ENCODE measurements at regions of chr6 and their contacts with region 1.

Region 1: DNA sequence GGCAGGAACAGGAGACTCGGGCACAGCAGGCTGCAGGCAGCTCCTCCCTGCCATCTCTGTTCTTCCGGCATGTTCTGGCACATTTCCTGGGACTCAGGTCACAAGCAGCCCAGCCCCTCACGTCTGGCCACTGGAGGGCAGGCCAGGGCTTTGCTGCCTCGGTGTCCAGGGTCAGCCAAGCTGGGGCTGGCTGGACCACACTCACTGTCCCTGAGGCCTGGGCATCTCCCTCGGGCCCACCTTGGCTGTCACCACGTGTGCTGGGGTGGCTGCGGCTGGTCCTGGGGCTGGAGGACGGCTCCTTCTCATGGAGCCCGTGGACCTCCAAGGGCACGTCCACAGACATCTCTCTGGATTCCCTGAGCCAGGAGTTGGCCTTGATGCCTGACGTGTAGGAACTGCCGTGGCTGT is 18.5 kb downstream of the FRMD1 start:
- DNase-seq: peak; percentile 87
- H3K4me3 ChIP-seq: no peak overlapping the region
- H3K27ac ChIP-seq: no peak overlapping the region
- H3K4me1 ChIP-seq: peaks cover 0 to 7% of the 10 kb centered on the region in 2 experiments; a peak in 1 of 4 replicates
- H3K27me3 ChIP-seq: no peaks in the 10 kb centered on the region
- CTCF ChIP-seq: no peak
- EP300 ChIP-seq: no peak
- RAD21 ChIP-seq: peak; percentile 77

Region 2: GRCh38 chr6:167733740-167734661 is 326.5 kb before region 1 on chr6:
- CTCF ChIA-PET with region 1: no interaction called
- POLR2A ChIA-PET with region 1: no interaction called
- DNase-seq: no peak
- H3K4me3 ChIP-seq: no peak overlapping the region
- H3K27ac ChIP-seq: no peak overlapping the region
- H3K4me1 ChIP-seq: peaks cover 0 to 5% of the 10 kb centered on the region in 2 experiments; a peak in 1 of 4 replicates
- H3K27me3 ChIP-seq: no peaks in the 10 kb centered on the region
- CTCF ChIP-seq: no peak
- EP300 ChIP-seq: no peak
- RAD21 ChIP-seq: no peak

Region 3: DNA sequence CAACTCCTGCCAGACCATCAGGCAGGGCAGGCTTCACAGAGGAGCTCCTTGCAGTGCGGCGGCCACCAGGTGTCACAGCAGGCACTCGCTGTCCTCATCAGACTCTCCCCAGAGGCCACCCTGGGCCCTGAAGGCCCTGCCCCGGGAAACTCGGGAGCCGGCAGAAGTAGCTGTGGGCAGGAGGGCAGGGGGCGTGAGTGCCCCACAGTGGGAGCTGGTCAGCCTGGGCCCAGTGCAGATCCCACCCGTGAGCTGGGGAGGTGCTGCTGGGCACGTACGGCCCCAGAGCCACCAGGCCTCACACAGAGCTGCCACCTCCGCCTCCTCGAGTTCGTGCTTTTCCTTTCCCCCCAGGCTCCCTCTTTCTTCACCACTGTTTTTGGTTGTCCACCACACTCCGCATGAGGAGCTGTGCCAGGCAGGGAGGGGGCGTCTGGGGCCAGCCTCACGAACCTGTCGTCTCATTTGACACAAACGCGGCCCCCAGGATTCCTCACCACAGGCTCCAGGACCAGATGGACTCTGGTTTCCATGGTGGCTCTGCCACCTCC is 15.3 kb before region 1 on chr6:
- CTCF ChIA-PET with region 1: interaction called, 11 read pairs
- POLR2A ChIA-PET with region 1: interaction called, 3 read pairs
- DNase-seq: no peak
- H3K4me3 ChIP-seq: no peak overlapping the region
- H3K27ac ChIP-seq: no peak overlapping the region
- H3K4me1 ChIP-seq: peaks cover 0 to 10% of the 10 kb centered on the region in 2 experiments; a peak in 1 of 4 replicates
- H3K27me3 ChIP-seq: no peaks in the 10 kb centered on the region
- CTCF ChIP-seq: no peak
- EP300 ChIP-seq: no peak
- RAD21 ChIP-seq: 0 out of 2 replicates have a peak, but pooled peaks have one; percentile 13

Region 4: DNA sequence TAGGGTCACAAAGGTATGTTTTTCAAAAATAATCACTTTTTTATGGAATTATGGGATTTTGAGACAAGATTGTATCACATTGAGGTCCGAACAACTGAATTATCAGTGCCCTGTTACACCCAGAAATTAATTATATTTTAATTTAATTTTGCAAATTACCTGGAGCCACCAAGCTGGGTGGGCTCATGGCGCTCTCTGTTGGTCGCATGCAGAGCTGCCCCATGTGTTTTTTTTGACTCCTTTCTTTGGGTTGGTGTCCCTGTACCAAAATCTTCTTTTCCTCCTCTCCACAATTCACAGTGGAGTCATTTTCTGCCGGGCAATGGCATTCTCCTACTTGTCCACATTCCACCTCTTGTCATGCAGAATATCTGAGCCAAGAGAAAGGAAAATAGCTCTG is 57.4 kb after region 1 on chr6:
- CTCF ChIA-PET with region 1: interaction called, 17 read pairs
- POLR2A ChIA-PET with region 1: no interaction called
- DNase-seq: peak; percentile 32
- H3K4me3 ChIP-seq: no peak overlapping the region
- H3K27ac ChIP-seq: no peak overlapping the region
- H3K4me1 ChIP-seq: no peaks in the 10 kb centered on the region
- H3K27me3 ChIP-seq: no peaks in the 10 kb centered on the region
- CTCF ChIP-seq: no peak
- EP300 ChIP-seq: no peak
- RAD21 ChIP-seq: peak; percentile 55

Region 5: DNA sequence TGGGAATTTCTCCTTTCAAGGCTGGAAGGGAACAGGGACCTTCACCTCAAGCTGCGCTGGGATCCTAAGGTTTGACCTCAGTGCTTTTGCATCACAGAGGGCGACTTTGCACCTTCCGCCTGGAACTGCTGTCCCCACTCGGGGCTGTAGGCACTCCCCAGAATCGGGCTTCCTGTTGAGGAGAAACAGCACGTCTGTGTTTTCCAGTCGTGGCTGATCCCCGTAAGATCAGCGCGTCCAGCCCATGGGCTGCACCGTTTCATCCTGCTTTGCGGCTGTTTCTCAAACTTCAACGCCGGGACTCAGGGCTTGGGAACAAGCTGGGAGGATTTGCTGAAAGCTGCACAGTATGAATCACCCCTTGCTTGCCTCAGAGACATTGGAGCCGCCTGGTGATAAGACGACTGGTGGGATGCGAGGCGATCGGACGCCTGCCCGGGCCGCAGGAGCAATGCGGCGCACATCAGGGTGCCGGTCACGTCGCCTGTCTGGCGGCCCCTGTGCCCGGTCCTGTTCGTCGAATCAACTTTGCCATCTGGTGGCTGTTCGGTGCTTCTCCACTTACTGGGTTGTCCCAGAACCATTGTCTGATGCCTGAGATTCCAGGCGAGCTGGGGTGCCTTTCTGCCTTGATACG is 72.1 kb after region 1 on chr6:
- CTCF ChIA-PET with region 1: interaction called, 32 read pairs
- POLR2A ChIA-PET with region 1: no interaction called
- DNase-seq: peak; percentile 72
- H3K4me3 ChIP-seq: no peak overlapping the region
- H3K27ac ChIP-seq: no peak overlapping the region
- H3K4me1 ChIP-seq: no peaks in the 10 kb centered on the region; a peak in 1 of 4 replicates
- H3K27me3 ChIP-seq: no peaks in the 10 kb centered on the region
- CTCF ChIP-seq: no peak
- EP300 ChIP-seq: no peak
- RAD21 ChIP-seq: peak; percentile 52

Measured in SK-N-SH (cell line).